Activated CD4-positive, alpha-beta memory T cell treated with anti-CD3 and anti-CD28 coated beads for 36 hours (primary cell): ENCODE measurements at regions of chr2 and their contacts with region 1.

Region 1: DNA sequence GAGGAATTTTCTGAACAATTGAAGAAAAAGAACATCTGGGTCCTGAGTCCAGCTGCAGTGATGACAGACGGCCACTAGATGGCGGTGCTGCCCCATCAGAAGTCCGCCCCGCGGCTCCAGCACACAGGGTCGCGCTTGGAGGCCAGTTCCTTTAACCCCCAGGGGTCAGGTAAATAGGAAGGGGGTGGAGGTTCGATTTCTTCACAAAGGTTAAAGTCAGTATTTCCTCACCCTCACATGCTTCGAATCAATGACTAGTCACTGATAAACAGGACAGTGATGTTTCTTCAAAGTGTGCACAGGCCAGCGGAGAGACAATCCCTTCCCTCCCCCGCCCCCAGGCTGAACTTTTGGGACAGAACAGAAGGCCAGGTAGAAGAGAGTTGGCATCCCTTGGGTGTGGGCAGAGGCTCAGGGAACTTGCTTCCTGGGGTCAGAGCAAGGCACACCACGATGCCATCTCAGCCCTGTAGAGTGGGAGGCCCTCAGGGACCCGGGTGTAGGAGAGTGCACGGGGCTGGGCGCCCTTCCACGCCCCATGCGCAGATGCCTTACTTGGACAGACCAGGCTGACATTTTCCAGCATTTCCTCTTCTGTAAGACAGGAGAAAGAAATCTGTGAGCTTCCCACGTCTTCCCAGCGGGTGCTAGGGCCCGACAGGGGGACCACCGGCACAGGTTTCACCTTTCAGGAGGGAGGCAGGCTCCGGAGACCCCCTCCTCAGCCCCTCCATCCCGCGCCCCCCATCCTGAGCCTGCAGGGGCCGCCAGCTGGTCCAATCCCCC is 722 bp downstream of the APOB start:
- DNase-seq: peak; percentile 69
- H3K4me3 Mint-ChIP-seq: no peak overlapping the region
- H3K27ac Mint-ChIP-seq: no peak overlapping the region
- H3K4me1 Mint-ChIP-seq: peaks cover 3% of the 10 kb centered on the region
- H3K27me3 Mint-ChIP-seq: peaks cover 27% of the 10 kb centered on the region

Region 2: GRCh38 chr2:21010813-21011439 is 32.2 kb before region 1 on chr2:
- CTCF ChIA-PET with region 1: no interaction called
- POLR2A ChIA-PET with region 1: no interaction called
- intact Hi-C with region 1: no loop called
- DNase-seq: no peak
- H3K4me3 Mint-ChIP-seq: no peak overlapping the region
- H3K27ac Mint-ChIP-seq: no peak overlapping the region
- H3K4me1 Mint-ChIP-seq: no peaks in the 10 kb centered on the region
- H3K27me3 Mint-ChIP-seq: peaks cover 11% of the 10 kb centered on the region

Region 3: DNA sequence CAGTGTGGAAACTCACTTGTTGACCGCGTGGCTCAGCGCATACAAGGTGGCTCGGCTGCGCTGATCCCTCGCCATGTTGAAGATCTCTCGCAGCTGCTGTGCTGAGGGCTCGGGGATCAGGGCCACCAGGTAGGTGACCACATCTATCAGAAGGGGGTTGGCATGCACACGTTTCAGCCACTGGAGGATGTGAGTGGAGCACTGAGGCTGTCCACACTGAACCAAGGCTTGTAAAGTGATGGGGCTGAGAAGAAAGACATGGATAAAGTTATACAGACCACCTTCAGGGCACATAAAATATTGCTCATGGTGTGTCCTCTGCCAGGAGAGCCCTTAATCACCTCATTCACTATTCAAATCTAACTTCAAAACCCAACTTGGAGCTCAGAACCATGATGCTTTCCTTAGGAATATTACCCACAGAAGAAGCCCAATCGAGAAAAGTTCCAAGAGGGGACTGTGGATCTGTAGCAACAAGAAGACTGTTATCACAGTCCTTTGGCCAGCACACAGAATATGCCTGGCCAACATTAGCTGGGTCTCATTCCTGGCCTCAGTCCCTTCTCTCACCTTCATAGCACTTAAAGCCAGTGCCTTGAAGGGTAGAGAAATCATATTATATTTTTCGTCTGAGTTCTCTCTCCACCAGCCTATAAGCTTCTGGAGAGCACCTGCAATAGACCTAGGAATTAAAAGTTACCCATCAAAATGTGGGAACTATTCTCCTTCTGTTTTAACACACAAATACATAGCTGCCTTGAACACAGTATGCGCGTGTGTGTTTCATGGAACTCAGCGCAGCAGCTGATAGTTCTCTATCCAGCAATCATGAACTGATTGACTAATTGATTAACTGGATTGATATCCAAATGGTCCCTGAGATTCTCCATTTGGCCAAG is 10.6 kb before region 1 on chr2:
- CTCF ChIA-PET with region 1: interaction called, 11 read pairs
- POLR2A ChIA-PET with region 1: no interaction called
- intact Hi-C with region 1: no loop called
- DNase-seq: no peak
- H3K4me3 Mint-ChIP-seq: no peak overlapping the region
- H3K27ac Mint-ChIP-seq: no peak overlapping the region
- H3K4me1 Mint-ChIP-seq: no peaks in the 10 kb centered on the region
- H3K27me3 Mint-ChIP-seq: peaks cover 7% of the 10 kb centered on the region

Region 4: DNA sequence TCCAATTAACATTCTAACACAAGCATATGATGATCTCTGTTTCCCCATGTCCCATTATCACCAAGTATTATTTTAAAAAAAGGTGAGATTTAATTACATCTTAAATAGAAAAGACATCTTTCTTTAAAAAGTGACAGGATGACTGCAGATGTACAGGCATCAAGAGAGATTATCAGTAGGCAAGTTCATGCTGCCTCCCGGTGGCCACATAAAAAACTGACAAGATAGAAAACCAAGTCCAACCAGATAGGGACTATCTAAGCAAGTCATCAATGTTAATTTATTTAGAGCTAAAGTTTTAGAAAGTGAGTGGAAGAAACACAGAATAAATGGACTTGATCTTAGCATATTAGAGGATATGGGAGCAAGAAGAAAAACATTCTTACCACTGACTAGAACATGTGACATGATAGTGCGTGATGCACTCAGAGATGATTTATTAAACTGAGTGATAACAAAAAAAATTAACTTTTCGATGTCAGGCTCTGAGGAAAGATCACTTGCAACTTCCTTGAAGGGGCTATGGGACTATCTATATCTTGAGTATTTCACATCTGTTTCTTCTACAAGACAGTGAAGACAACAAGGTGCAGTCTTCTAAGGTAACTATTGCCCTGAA is 75.3 kb after region 1 on chr2:
- CTCF ChIA-PET with region 1: interaction called, 12 read pairs
- POLR2A ChIA-PET with region 1: no interaction called
- intact Hi-C with region 1: loop called (anchors 1 kb)
- DNase-seq: peak; percentile 19
- H3K4me3 Mint-ChIP-seq: no peak overlapping the region
- H3K27ac Mint-ChIP-seq: no peak overlapping the region
- H3K4me1 Mint-ChIP-seq: no peaks in the 10 kb centered on the region
- H3K27me3 Mint-ChIP-seq: peaks cover 6% of the 10 kb centered on the region

Region 5: GRCh38 chr2:21146638-21147037 is 103.5 kb after region 1 on chr2:
- CTCF ChIA-PET with region 1: no interaction called
- POLR2A ChIA-PET with region 1: no interaction called
- intact Hi-C with region 1: no loop called
- DNase-seq: no peak
- H3K4me3 Mint-ChIP-seq: no peak overlapping the region
- H3K27ac Mint-ChIP-seq: no peak overlapping the region
- H3K4me1 Mint-ChIP-seq: no peaks in the 10 kb centered on the region
- H3K27me3 Mint-ChIP-seq: no peaks in the 10 kb centered on the region

Region 6: DNA sequence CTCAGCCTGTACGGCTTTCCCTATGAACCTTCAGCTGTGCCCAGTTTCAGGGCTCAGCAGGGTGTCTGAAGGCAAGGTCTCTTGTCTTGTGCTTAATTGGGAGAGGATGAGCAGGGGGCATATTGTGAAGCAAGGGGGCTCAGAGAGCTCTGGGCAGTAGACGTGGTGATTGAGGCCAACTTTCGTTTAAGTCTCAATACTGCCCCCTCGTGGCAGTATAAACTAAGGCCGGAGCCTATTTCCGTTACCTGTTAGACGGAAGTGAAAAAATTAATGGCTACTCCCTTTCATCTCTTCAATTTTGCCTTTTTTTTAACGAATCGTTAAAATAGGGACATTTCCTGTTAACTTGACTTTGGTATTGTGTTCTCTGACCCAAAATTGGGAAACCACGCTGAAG is 274.0 kb after region 1 on chr2:
- CTCF ChIA-PET with region 1: interaction called, 30 read pairs
- POLR2A ChIA-PET with region 1: no interaction called
- intact Hi-C with region 1: loop called (anchors 1 kb)
- DNase-seq: peak; percentile 38
- H3K4me3 Mint-ChIP-seq: no peak overlapping the region
- H3K27ac Mint-ChIP-seq: no peak overlapping the region
- H3K4me1 Mint-ChIP-seq: no peaks in the 10 kb centered on the region
- H3K27me3 Mint-ChIP-seq: no peaks in the 10 kb centered on the region